Sigmoid colon (tissue), 7 donors: ENCODE measurements at regions of chr1 and their contacts with region 1.

Region 1: DNA sequence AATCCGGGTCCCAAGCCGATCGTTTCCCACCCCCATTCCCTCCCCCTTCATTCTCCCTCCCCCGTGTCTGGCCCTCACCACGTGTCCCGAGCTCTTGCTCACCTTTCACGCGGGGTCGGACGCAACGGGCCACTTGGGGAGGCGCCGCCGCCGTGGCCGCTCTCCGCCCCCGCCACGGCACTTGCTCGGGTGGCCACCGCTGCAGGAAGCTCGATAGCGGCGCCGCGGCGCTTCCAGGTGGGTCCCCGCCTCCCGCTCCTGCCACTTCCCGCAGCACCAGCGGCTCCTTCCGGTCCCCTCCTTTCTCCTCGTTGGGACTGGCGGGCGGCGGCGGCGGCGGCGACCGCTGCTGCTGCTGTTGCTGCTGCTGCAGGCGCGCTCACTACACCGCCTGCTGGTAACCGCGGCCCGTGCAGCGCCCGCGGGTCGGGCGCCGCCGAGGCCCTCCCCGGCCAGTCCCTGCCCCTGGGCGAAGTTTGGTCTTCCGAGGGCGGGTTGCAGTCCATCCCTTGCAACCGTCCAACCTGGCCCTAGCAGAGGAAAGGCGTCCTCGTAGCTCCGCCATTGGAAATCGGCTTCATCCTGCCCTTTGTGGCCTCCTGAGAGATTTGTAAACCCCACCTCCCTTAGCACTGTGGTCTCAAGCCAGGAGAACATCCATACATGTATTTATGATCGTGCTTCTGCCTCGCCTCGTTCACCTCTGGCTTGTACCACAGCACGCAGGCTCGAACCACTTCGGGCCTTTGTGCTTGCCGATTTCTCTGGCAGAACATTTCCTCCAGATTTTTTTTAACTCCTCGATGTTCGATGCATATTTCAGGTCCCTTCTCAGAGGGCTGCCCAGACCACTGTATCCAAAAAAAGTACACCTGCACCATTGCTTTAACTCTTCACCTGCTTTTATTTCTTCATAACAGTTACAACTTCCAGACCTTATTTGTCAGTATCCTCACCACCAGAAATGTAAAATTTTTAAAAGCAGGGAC is 996 bp upstream of the ZZZ3 start:
- DNase-seq: peak; percentile 96
- H3K4me3 ChIP-seq: peak overlapping the region; percentile 75 to 93 (median 88)
- H3K27ac ChIP-seq: peak overlapping the region; percentile 93 to 97 (median 94)
- H3K4me1 ChIP-seq: peaks cover 0 to 43% (median 34%) of the 10 kb centered on the region in 4 donors
- H3K27me3 ChIP-seq: no peaks in the 10 kb centered on the region
- CTCF ChIP-seq: peak; percentile 49 to 90 (median 79)
- EP300 ChIP-seq: no peak
- POLR2A ChIP-seq: no peak

Region 2: DNA sequence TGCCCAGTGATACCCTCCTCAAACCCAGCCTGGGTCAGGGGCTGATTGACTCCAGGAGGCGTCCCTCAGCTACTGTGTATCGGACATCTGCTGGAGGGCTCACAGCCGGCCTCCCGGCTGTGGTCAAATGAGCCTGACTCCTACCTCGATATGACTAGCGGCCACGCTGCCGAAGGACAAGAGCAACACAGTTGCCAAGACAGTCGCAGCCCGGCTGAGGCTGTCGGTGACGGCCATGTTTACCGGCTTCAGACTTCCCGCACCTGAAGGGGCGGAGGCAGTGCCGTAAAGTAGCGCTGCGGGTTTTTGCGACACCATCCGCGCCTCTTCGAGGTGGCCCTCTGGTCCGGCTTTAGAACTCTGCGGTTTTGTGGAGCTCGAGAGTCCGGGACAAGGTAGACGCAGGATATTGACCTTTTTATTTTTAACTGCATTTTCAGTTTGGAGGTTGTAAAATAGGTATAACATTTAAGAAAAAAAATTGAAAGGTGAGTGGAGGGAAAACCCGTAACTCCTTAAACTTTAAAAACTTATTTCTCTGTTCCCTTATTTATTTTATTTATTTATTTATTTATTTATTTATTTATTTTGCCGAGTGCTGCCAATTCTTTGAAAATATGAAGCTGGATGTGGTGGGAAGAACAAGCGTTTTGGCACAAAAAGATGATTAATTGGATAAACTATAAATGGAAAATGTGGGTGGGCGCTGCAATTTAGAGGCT is 464.1 kb before region 1 on chr1 and contains the start of gene PIGK:
- intact Hi-C with region 1: loop called (anchors 5 kb)
- DNase-seq: peak; percentile 91
- H3K4me3 ChIP-seq: peak within 1 kb of the TSS; percentile 62 to 78 (median 68)
- H3K27ac ChIP-seq: peak within 1 kb of the TSS; percentile 82 to 88 (median 85)
- H3K4me1 ChIP-seq: peaks cover 0 to 11% (median 3%) of the 10 kb centered on the region in 4 donors
- H3K27me3 ChIP-seq: no peaks in the 10 kb centered on the region
- CTCF ChIP-seq: no peak
- EP300 ChIP-seq: no peak
- POLR2A ChIP-seq: no peak
- total RNA-seq, gene PIGK: 15.9 to 20.0 (median 18.1) TPM

Region 3: DNA sequence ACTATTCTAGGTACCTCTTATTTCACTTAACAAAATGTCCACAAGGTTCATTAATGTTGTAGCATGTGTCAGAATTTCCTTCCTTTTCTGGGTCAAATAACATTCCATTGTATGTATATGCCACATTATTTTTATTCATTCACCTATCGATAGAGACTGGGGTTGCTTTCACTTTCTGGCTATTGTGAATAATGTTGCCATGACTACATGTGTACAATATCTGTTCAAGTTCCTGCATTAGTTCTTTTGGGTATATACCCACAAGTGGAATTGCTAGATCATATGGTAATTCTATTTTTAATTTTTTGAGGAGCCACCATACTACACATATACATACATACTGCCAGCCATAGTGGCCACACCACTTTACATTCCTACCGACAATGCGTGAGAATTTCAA is 159.4 kb before region 1 on chr1:
- intact Hi-C with region 1: no loop called
- DNase-seq: no peak
- H3K4me3 ChIP-seq: no peak overlapping the region
- H3K27ac ChIP-seq: no peak overlapping the region
- H3K4me1 ChIP-seq: no peaks in the 10 kb centered on the region
- H3K27me3 ChIP-seq: no peaks in the 10 kb centered on the region
- CTCF ChIP-seq: no peak
- EP300 ChIP-seq: no peak
- POLR2A ChIP-seq: no peak

Region 4: GRCh38 chr1:77605246-77606026 is 78.0 kb before region 1 on chr1:
- intact Hi-C with region 1: no loop called
- DNase-seq: peak; percentile 77
- H3K4me3 ChIP-seq: no peak overlapping the region
- H3K27ac ChIP-seq: no peak overlapping the region
- H3K4me1 ChIP-seq: peaks cover 0 to 11% (median 8%) of the 10 kb centered on the region in 4 donors
- H3K27me3 ChIP-seq: no peaks in the 10 kb centered on the region
- CTCF ChIP-seq: no peak
- EP300 ChIP-seq: no peak
- POLR2A ChIP-seq: no peak

Region 5: GRCh38 chr1:77759071-77760028 is 75.9 kb after region 1 on chr1 and contains the start of gene USP33:
- intact Hi-C with region 1: loop called (anchors 5 kb)
- DNase-seq: peak; percentile 91
- H3K4me3 ChIP-seq: peak within 1 kb of the TSS; percentile 84 to 99 (median 91)
- H3K27ac ChIP-seq: peak within 1 kb of the TSS; percentile 89 to 96 (median 92)
- H3K4me1 ChIP-seq: peaks cover 0 to 34% (median 19%) of the 10 kb centered on the region in 4 donors
- H3K27me3 ChIP-seq: no peaks in the 10 kb centered on the region
- CTCF ChIP-seq: no peak
- EP300 ChIP-seq: no peak
- POLR2A ChIP-seq: peak; percentile 60 to 76
- total RNA-seq, gene USP33: 47.5 to 81.6 (median 70.2) TPM